ENCODE measurements at regions of chr3 and their contacts with region 1.

Region 1: GRCh38 chr3:188111002-188111584 is 42.9 kb upstream of the LPP start:
- DNase-seq: no peak
- ATAC-seq: no peak
- H3K4me3 ChIP-seq: no peak overlapping the region
- H3K4me3 Mint-ChIP-seq: no peak overlapping the region
- H3K27ac ChIP-seq: no peak overlapping the region
- H3K27ac Mint-ChIP-seq: no peak overlapping the region
- H3K4me1 ChIP-seq: no peaks in the 10 kb centered on the region
- H3K4me1 Mint-ChIP-seq: peaks cover 6% of the 10 kb centered on the region
- H3K27me3 ChIP-seq: no peaks in the 10 kb centered on the region
- H3K27me3 Mint-ChIP-seq: no peaks in the 10 kb centered on the region
- CTCF ChIP-seq: no peak

Region 2: GRCh38 chr3:186759231-186759930 is 1351.7 kb before region 1 on chr3:
- CTCF ChIA-PET with region 1: no interaction called
- POLR2A ChIA-PET with region 1: no interaction called
- intact Hi-C with region 1: loop called in 1 of 2 experiments (anchors 10 kb)
- DNase-seq: no peak
- ATAC-seq: no peak
- H3K4me3 ChIP-seq: no peak overlapping the region
- H3K4me3 Mint-ChIP-seq: no peak overlapping the region
- H3K27ac ChIP-seq: no peak overlapping the region
- H3K27ac Mint-ChIP-seq: no peak overlapping the region
- H3K4me1 ChIP-seq: no peaks in the 10 kb centered on the region
- H3K4me1 Mint-ChIP-seq: no peaks in the 10 kb centered on the region
- H3K27me3 ChIP-seq: no peaks in the 10 kb centered on the region
- H3K27me3 Mint-ChIP-seq: no peaks in the 10 kb centered on the region
- CTCF ChIP-seq: no peak

Region 3: GRCh38 chr3:188097791-188098190 is 13.3 kb before region 1 on chr3:
- CTCF ChIA-PET with region 1: no interaction called
- POLR2A ChIA-PET with region 1: no interaction called
- intact Hi-C with region 1: no loop called
- DNase-seq: no peak
- ATAC-seq: no peak
- H3K4me3 ChIP-seq: no peak overlapping the region
- H3K4me3 Mint-ChIP-seq: no peak overlapping the region
- H3K27ac ChIP-seq: no peak overlapping the region
- H3K27ac Mint-ChIP-seq: no peak overlapping the region
- H3K4me1 ChIP-seq: no peaks in the 10 kb centered on the region
- H3K4me1 Mint-ChIP-seq: no peaks in the 10 kb centered on the region
- H3K27me3 ChIP-seq: no peaks in the 10 kb centered on the region
- H3K27me3 Mint-ChIP-seq: no peaks in the 10 kb centered on the region
- CTCF ChIP-seq: no peak

Region 4: GRCh38 chr3:188262913-188263683 is 152.0 kb after region 1 on chr3:
- CTCF ChIA-PET with region 1: no interaction called
- POLR2A ChIA-PET with region 1: no interaction called
- intact Hi-C with region 1: loop called in 1 of 2 experiments (anchors 5 kb)
- DNase-seq: no peak
- ATAC-seq: no peak
- H3K4me3 ChIP-seq: no peak overlapping the region
- H3K4me3 Mint-ChIP-seq: no peak overlapping the region
- H3K27ac ChIP-seq: no peak overlapping the region
- H3K27ac Mint-ChIP-seq: no peak overlapping the region
- H3K4me1 ChIP-seq: no peaks in the 10 kb centered on the region
- H3K4me1 Mint-ChIP-seq: peaks cover 4% of the 10 kb centered on the region
- H3K27me3 ChIP-seq: no peaks in the 10 kb centered on the region
- H3K27me3 Mint-ChIP-seq: no peaks in the 10 kb centered on the region
- CTCF ChIP-seq: no peak

Measured in CD8-positive, alpha-beta T cell (primary cell).